ENCODE measurements at regions of chr12 and their contacts with region 1.

Region 1: DNA sequence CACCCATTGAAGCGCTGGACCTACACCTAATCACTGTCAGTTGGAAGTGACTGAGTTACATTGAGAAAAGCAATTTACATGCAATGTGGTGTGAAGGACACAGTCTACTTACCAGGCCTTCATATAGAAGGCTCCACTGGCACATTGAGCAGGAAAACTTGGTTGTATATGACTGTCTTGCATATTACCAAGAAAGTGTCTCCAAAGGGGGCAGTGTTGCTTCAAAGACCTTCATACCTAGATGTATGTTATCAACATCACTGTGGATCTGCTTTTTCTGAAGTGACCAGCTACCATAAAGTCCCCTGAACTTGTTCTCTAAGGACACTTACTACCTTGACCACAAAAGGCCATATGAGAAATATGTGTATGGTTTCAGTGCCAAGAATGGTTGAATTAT is 64.1 kb downstream of the NELL2 start:
- DNase-seq: peak in 6 of 9 experiments; percentile 19 to 86 (median 57)
- ATAC-seq: peak; percentile 83
- H3K4me3 ChIP-seq: no peak overlapping the region
- H3K4me3 Mint-ChIP-seq: no peak overlapping the region
- H3K27ac ChIP-seq: no peak overlapping the region
- H3K27ac Mint-ChIP-seq: peak overlapping the region; percentile 86
- H3K4me1 ChIP-seq: peaks cover 54% of the 10 kb centered on the region
- H3K4me1 Mint-ChIP-seq: peaks cover 64% of the 10 kb centered on the region
- H3K27me3 ChIP-seq: no peaks in the 10 kb centered on the region
- H3K27me3 Mint-ChIP-seq: no peaks in the 10 kb centered on the region
- CTCF ChIP-seq: peak; percentile 55

Region 2: DNA sequence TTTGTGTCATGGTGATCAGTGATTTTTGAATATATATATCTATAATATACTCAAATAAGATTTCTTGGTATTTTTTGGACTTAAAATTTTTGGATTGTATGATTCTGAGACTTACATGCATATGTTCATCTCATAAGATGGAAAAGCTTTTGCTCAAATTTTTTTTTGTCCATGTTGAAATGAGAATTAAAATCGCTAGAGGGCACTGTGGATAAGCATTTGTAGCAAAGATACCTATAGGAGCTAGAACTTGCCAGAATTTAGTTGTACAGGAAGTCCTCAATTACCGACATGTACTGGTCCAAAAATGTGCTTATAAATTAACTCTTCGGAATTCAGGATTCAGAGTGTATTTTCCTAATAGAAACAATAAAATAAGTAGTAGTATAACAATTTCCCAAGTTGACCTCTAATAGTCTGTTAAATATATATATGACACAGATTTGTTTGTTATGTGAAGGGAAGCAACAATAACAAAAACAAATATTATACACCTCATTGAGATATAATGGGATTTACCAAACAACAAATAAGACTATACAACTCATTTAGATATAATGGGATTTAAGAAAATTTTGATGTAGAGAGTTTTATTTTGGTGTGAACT is 796.6 kb before region 1 on chr12:
- CTCF ChIA-PET with region 1: no interaction called
- POLR2A ChIA-PET with region 1: no interaction called
- intact Hi-C with region 1: loop called in 1 of 2 experiments (anchors 10 kb)
- DNase-seq: peak in 2 of 9 experiments; percentile 48 to 65
- ATAC-seq: peak; percentile 52
- H3K4me3 ChIP-seq: no peak overlapping the region
- H3K4me3 Mint-ChIP-seq: no peak overlapping the region
- H3K27ac ChIP-seq: no peak overlapping the region
- H3K27ac Mint-ChIP-seq: no peak overlapping the region
- H3K4me1 ChIP-seq: no peaks in the 10 kb centered on the region
- H3K4me1 Mint-ChIP-seq: peaks cover 2% of the 10 kb centered on the region
- H3K27me3 ChIP-seq: no peaks in the 10 kb centered on the region
- H3K27me3 Mint-ChIP-seq: no peaks in the 10 kb centered on the region
- CTCF ChIP-seq: peak; percentile 71

Region 3: DNA sequence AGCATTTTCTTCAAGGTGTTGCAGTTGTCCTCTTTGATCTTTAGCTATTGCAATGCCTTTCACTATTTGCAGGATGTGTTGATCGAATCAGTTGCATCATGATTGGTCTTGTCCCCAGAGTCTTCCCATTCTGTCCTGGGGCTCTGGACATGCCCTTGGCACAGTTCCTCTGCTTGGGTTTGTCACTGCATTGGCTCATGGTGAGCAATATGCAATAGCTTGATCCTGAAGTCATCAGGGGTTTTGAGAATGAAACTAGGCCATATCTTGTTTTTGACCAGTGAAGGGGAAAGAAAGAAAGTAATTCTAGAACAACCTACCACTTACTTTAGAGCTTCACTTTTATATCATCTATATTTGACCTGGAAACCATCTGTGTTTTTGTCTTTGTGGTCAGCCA is 694.7 kb before region 1 on chr12:
- CTCF ChIA-PET with region 1: no interaction called
- POLR2A ChIA-PET with region 1: no interaction called
- intact Hi-C with region 1: no loop called
- DNase-seq: no peak
- ATAC-seq: no peak
- H3K4me3 ChIP-seq: no peak overlapping the region
- H3K4me3 Mint-ChIP-seq: no peak overlapping the region
- H3K27ac ChIP-seq: no peak overlapping the region
- H3K27ac Mint-ChIP-seq: no peak overlapping the region
- H3K4me1 ChIP-seq: no peaks in the 10 kb centered on the region
- H3K4me1 Mint-ChIP-seq: no peaks in the 10 kb centered on the region
- H3K27me3 ChIP-seq: no peaks in the 10 kb centered on the region
- H3K27me3 Mint-ChIP-seq: no peaks in the 10 kb centered on the region
- CTCF ChIP-seq: no peak

Region 4: GRCh38 chr12:44709166-44709565 is 102.9 kb before region 1 on chr12:
- CTCF ChIA-PET with region 1: no interaction called
- POLR2A ChIA-PET with region 1: no interaction called
- intact Hi-C with region 1: no loop called
- DNase-seq: no peak
- ATAC-seq: no peak
- H3K4me3 ChIP-seq: no peak overlapping the region
- H3K4me3 Mint-ChIP-seq: no peak overlapping the region
- H3K27ac ChIP-seq: no peak overlapping the region
- H3K27ac Mint-ChIP-seq: no peak overlapping the region
- H3K4me1 ChIP-seq: no peaks in the 10 kb centered on the region
- H3K4me1 Mint-ChIP-seq: peaks cover 22% of the 10 kb centered on the region
- H3K27me3 ChIP-seq: no peaks in the 10 kb centered on the region
- H3K27me3 Mint-ChIP-seq: no peaks in the 10 kb centered on the region
- CTCF ChIP-seq: no peak

Region 5: DNA sequence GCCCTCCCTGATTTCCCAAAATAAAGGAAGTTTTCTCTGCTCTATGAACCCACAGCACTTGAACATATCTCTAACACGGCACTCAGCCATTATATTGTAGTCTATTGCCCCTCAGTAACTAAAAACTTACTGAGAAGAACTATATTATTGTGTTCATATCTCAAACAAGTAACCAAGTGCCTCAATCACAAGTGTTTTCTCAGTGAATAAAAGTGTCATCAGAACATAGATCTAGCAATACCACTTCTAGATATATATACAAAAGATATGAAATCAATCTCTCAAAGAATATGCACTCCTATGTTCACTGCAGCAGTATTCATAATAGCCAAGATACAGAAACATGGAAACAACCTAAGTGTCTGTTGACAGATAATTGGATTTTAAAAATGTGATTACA is 74.0 kb before region 1 on chr12:
- CTCF ChIA-PET with region 1: no interaction called
- POLR2A ChIA-PET with region 1: no interaction called
- intact Hi-C with region 1: no loop called
- DNase-seq: no peak
- ATAC-seq: no peak
- H3K4me3 ChIP-seq: no peak overlapping the region
- H3K4me3 Mint-ChIP-seq: no peak overlapping the region
- H3K27ac ChIP-seq: no peak overlapping the region
- H3K27ac Mint-ChIP-seq: no peak overlapping the region
- H3K4me1 ChIP-seq: no peaks in the 10 kb centered on the region
- H3K4me1 Mint-ChIP-seq: peaks cover 9% of the 10 kb centered on the region
- H3K27me3 ChIP-seq: no peaks in the 10 kb centered on the region
- H3K27me3 Mint-ChIP-seq: no peaks in the 10 kb centered on the region
- CTCF ChIP-seq: no peak

Region 6: DNA sequence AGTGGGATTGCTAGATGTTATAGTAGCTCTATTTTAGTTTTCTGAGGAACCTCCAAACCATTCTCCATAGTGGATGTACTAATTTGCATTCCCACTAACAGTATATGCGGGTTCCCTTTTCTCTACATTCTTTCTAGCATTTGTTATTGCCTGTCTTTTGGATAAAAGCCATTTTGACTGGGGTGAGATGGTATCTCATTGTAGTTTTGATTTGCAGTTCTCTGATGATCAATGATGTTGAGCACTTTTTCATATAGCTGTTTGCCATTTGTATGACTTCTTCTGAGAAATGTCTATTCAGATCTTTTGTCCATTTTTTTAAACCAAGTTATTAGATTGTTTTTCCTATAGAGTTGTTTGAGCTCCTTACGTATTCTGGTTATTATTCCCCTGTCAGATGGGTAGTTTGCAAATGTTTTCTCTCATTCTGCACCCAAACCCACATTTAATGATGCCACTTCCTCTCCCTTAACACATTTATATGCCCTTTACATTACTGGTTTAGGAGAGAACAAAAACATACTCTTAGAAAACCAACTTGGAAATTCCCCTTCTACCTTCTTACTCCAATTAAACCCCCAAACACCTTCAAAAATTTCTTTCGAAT is 15.9 kb after region 1 on chr12:
- CTCF ChIA-PET with region 1: interaction called, 16 read pairs
- POLR2A ChIA-PET with region 1: interaction called, 5 read pairs
- intact Hi-C with region 1: loop called in 1 of 2 experiments (anchors 1 kb)
- DNase-seq: peak in 2 of 9 experiments; percentile 77 to 89
- ATAC-seq: peak; percentile 86
- H3K4me3 ChIP-seq: peak overlapping the region in 1 of 2 experiments; percentile 9
- H3K4me3 Mint-ChIP-seq: peak overlapping the region; percentile 65
- H3K27ac ChIP-seq: peak overlapping the region; percentile 63 to 78
- H3K27ac Mint-ChIP-seq: peak overlapping the region; percentile 90
- H3K4me1 ChIP-seq: peaks cover 58% of the 10 kb centered on the region
- H3K4me1 Mint-ChIP-seq: peaks cover 69% of the 10 kb centered on the region
- H3K27me3 ChIP-seq: no peaks in the 10 kb centered on the region
- H3K27me3 Mint-ChIP-seq: no peaks in the 10 kb centered on the region
- CTCF ChIP-seq: no peak

Region 7: DNA sequence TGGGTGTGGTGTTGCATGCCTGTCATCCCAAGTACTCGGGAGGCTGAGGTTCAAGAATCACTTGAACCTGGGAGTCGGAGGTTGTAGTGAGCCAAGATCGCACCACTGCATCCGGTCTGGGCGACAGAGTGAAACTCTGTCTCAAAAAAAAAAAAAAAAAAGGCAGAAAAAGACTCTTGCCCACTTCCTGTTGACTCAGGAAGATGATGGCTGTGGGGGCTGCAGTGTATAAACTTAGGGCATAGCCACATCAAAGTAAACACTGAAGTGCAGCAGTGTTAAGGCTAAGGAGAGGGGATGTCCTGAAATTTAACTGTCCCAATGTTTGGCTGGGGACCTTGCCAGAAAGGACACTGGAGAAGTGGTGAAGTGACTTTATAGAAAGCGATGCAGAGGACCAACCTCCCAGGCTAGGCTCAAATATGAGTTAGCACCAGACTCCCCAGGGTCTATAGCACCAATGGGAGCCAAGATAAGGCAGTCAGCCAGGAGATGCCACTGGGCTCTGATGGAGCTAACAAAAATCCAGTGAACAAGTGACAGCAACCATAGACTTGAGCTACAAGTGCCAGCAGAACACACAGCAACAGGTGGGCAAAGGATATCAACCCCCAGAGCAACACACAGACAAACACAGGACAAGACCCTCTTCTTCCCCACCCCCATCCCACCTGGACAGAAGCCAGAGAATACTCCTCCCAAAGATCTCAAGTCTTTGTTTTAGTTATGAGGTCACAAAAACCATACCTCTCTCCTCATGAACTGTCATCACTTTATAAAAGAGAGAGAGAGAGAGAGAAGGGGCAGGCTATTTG is 36.0 kb after region 1 on chr12:
- CTCF ChIA-PET with region 1: interaction called, 19 read pairs
- POLR2A ChIA-PET with region 1: interaction called, 5 read pairs
- intact Hi-C with region 1: loop called in 1 of 2 experiments (anchors 5 kb)
- DNase-seq: peak; percentile 34 to 94 (median 69)
- ATAC-seq: peak; percentile 83
- H3K4me3 ChIP-seq: peak overlapping the region; percentile 14 to 39
- H3K4me3 Mint-ChIP-seq: peak overlapping the region; percentile 64
- H3K27ac ChIP-seq: peak overlapping the region; percentile 81 to 85
- H3K27ac Mint-ChIP-seq: peak overlapping the region; percentile 99
- H3K4me1 ChIP-seq: peaks cover 93% of the 10 kb centered on the region
- H3K4me1 Mint-ChIP-seq: peaks cover 88% of the 10 kb centered on the region
- H3K27me3 ChIP-seq: no peaks in the 10 kb centered on the region
- H3K27me3 Mint-ChIP-seq: no peaks in the 10 kb centered on the region
- CTCF ChIP-seq: no peak

Region 8: GRCh38 chr12:44930972-44931600 is 119.0 kb after region 1 on chr12:
- CTCF ChIA-PET with region 1: interaction called, 34 read pairs
- POLR2A ChIA-PET with region 1: no interaction called
- intact Hi-C with region 1: loop called (anchors 1 kb)
- DNase-seq: peak in 3 of 9 experiments; percentile 11 to 76 (median 63)
- ATAC-seq: peak; percentile 58
- H3K4me3 ChIP-seq: no peak overlapping the region
- H3K4me3 Mint-ChIP-seq: no peak overlapping the region
- H3K27ac ChIP-seq: no peak overlapping the region
- H3K27ac Mint-ChIP-seq: no peak overlapping the region
- H3K4me1 ChIP-seq: peaks cover 5% of the 10 kb centered on the region
- H3K4me1 Mint-ChIP-seq: peaks cover 10% of the 10 kb centered on the region
- H3K27me3 ChIP-seq: no peaks in the 10 kb centered on the region
- H3K27me3 Mint-ChIP-seq: no peaks in the 10 kb centered on the region
- CTCF ChIP-seq: peak; percentile 80

Region 9: GRCh38 chr12:44942714-44943113 is 130.7 kb after region 1 on chr12:
- CTCF ChIA-PET with region 1: no interaction called
- POLR2A ChIA-PET with region 1: no interaction called
- intact Hi-C with region 1: no loop called
- DNase-seq: no peak
- ATAC-seq: no peak
- H3K4me3 ChIP-seq: no peak overlapping the region
- H3K4me3 Mint-ChIP-seq: no peak overlapping the region
- H3K27ac ChIP-seq: no peak overlapping the region
- H3K27ac Mint-ChIP-seq: no peak overlapping the region
- H3K4me1 ChIP-seq: no peaks in the 10 kb centered on the region
- H3K4me1 Mint-ChIP-seq: no peaks in the 10 kb centered on the region
- H3K27me3 ChIP-seq: no peaks in the 10 kb centered on the region
- H3K27me3 Mint-ChIP-seq: peaks cover 2% of the 10 kb centered on the region
- CTCF ChIP-seq: no peak